ENCODE measurements at regions of chr5 and their contacts with region 1.

Region 1: GRCh38 chr5:173057062-173057924 is 1.1 kb downstream of the CREBRF start:
- DNase-seq: peak; percentile 98
- ATAC-seq: peak; percentile 80
- H3K4me3 Mint-ChIP-seq: peak overlapping the region; percentile 96
- H3K27ac Mint-ChIP-seq: peak overlapping the region; percentile 95
- H3K4me1 Mint-ChIP-seq: peaks cover 55% of the 10 kb centered on the region
- H3K27me3 Mint-ChIP-seq: no peaks in the 10 kb centered on the region
- CTCF ChIP-seq: no peak

Region 2: DNA sequence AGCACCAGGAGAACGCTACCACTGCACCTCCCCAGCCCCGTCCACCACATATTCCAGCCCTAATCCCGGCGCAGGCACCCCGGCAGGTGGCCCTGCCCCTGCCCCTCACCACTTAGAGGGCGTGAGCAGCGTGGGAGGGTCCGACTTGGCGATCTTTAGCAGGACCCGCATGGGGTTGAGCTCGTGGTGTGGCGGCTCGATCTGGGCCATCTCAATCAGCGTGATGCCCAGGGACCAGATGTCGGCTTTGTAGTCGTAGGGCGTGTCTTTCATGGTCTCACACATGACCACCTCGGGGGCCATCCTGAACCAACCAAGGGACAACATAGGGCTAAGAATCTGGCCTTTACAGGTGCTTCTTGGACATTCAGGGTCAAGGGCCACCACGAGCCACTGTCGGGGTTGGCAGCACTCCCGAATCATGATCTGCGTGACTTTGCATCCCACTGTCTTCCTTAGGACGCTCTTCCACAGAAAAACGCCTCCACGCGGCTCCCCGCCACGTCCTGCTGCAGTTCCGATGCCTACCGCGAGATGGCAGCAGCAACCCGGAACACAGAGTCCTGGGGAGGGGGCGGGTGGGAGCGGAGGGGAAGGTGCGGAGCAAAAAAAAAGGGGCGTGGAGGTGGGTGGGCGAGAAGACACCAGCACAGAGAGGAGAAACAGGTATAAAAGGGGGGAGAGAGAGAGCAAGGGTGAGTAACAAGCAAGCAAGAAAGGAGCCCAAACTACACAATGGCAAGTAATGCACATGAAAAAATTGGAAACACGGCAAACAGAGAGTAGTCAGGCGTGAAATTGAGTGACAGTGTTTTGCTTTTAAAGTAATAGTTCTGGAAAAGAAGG is 950.6 kb before region 1 on chr5:
- CTCF ChIA-PET with region 1: no interaction called
- POLR2A ChIA-PET with region 1: no interaction called
- intact Hi-C with region 1: loop called (anchors 5 kb)
- DNase-seq: peak; percentile 71
- ATAC-seq: no peak
- H3K4me3 Mint-ChIP-seq: no peak overlapping the region
- H3K27ac Mint-ChIP-seq: peak overlapping the region; percentile 68
- H3K4me1 Mint-ChIP-seq: peaks cover 41% of the 10 kb centered on the region
- H3K27me3 Mint-ChIP-seq: no peaks in the 10 kb centered on the region
- CTCF ChIP-seq: peak; percentile 34

Region 3: GRCh38 chr5:172683696-172684471 is 373.4 kb before region 1 on chr5:
- CTCF ChIA-PET with region 1: no interaction called
- POLR2A ChIA-PET with region 1: no interaction called
- intact Hi-C with region 1: loop called (anchors 2 kb)
- DNase-seq: peak; percentile 52
- ATAC-seq: peak; percentile 89
- H3K4me3 Mint-ChIP-seq: peak overlapping the region; percentile 77
- H3K27ac Mint-ChIP-seq: peak overlapping the region; percentile 76
- H3K4me1 Mint-ChIP-seq: peaks cover 22% of the 10 kb centered on the region
- H3K27me3 Mint-ChIP-seq: peaks cover 2% of the 10 kb centered on the region
- CTCF ChIP-seq: no peak

Region 4: DNA sequence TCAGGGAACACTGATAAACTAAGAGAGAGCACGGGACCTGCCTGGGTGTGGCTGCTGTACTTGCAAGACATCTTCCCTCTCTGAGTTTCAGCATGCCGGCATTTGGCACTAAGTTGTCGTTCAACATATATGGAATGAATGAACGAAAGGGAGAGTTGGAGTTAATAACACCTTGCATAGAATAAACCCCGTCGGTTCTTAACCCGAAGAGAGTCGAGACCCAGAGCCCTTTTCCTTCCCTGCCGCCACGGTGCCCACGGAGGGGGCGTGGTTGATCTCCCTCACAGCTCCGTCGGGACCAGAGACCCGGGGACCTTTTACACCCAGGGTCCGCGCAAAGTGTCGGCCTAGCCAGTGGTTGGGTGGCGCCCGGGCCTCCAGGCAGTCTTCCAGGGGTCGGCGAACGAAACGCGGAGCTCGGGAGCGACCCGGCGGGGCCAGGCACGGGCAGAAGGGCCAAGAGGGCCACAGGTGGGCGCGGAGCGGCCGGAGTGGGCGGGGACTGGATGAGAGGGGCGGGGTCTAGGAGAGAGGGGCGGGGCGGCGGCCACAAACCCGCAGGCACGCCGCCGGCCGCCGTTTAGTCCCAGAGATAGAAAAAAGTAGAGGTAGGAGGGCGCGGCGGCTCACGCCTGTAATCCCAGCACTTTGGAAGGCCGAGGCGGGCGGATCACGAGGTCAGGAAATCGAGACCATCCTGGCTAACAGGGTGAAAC is 98.8 kb before region 1 on chr5:
- CTCF ChIA-PET with region 1: interaction called, 3 read pairs
- POLR2A ChIA-PET with region 1: interaction called, 8 read pairs
- intact Hi-C with region 1: loop called (anchors 1 kb)
- DNase-seq: peak; percentile 64
- ATAC-seq: peak; percentile 76
- H3K4me3 Mint-ChIP-seq: peak overlapping the region; percentile 97
- H3K27ac Mint-ChIP-seq: peak overlapping the region; percentile 94
- H3K4me1 Mint-ChIP-seq: peaks cover 31% of the 10 kb centered on the region
- H3K27me3 Mint-ChIP-seq: no peaks in the 10 kb centered on the region
- CTCF ChIP-seq: no peak

Region 5: GRCh38 chr5:173025651-173026050 is 31.6 kb before region 1 on chr5:
- CTCF ChIA-PET with region 1: no interaction called
- POLR2A ChIA-PET with region 1: no interaction called
- intact Hi-C with region 1: no loop called
- DNase-seq: no peak
- ATAC-seq: no peak
- H3K4me3 Mint-ChIP-seq: no peak overlapping the region
- H3K27ac Mint-ChIP-seq: peak overlapping the region; percentile 11
- H3K4me1 Mint-ChIP-seq: peaks cover 3% of the 10 kb centered on the region
- H3K27me3 Mint-ChIP-seq: no peaks in the 10 kb centered on the region
- CTCF ChIP-seq: no peak

Region 6: DNA sequence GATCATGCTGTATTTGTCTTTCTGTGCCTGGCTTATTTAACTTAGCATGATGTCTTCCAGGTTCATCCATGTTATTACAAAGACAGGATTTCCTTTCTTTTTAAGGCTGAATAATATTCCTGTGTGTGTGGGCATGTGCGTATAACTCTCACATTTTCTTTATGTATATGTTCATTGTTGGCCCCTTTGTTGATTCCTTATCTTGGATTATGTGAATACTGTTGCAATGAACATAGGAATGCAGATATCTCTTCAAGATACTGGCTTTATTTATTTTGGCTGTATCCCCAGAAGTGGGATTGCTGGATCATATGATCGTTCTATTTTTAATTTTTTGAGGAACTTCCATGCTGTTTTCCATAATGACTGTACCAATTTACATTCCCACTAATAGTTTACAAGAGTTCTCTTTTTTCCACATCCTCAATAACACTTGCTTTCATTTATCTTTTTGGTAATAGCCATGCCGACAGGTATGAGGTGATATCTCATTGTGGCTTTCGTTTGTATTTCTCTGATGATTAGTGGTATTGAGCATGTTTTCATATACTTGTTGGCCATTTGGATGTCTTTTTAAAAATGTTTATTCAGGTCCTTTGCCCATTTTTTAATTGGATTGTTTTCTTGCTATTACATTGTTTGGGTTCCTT is 36.8 kb after region 1 on chr5:
- CTCF ChIA-PET with region 1: no interaction called
- POLR2A ChIA-PET with region 1: no interaction called
- intact Hi-C with region 1: loop called (anchors 1 kb)
- DNase-seq: no peak
- ATAC-seq: no peak
- H3K4me3 Mint-ChIP-seq: no peak overlapping the region
- H3K27ac Mint-ChIP-seq: no peak overlapping the region
- H3K4me1 Mint-ChIP-seq: peaks cover 24% of the 10 kb centered on the region
- H3K27me3 Mint-ChIP-seq: no peaks in the 10 kb centered on the region
- CTCF ChIP-seq: no peak

Region 7: DNA sequence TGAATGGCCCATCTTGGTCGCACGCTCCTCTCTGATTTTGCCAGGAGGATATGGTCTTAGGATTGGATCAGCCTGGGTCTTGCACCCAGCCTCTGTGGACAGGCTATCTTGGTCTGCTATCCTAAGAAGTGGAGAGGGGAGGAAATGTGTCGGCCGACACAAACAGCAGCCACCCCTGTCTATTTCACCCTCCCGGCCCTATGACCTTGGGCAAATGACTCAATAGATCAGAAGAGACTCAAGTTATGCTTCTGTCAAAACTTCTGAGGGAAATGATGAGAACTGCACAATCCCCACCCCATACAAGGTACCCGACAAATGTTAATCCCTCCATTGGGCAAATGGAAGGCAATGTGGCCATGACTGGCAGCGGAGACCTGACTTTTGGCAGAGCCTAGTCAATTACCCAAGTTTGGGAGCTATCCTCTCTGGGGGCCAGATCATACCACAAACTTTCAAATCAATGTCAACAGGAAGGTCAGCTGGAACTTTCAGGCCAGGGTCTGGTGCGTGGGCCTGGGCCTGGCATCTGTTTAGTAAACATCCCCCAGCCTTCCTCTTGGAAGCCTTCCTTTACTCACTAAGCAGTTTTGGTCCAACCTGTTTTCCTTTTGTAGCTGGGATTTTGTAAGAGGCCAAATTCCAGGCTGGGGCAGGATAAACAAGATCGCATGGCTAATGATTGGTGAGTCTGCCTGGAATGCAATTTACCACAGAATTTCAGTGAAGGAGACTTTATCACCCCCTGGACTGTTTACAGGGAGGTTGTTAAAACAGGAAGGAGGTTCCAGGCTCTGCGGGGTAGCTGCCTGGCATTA is 766.6 kb after region 1 on chr5:
- CTCF ChIA-PET with region 1: no interaction called
- POLR2A ChIA-PET with region 1: no interaction called
- intact Hi-C with region 1: loop called (anchors 5 kb)
- DNase-seq: no peak
- ATAC-seq: no peak
- H3K4me3 Mint-ChIP-seq: no peak overlapping the region
- H3K27ac Mint-ChIP-seq: peak overlapping the region; percentile 42
- H3K4me1 Mint-ChIP-seq: peaks cover 86% of the 10 kb centered on the region
- H3K27me3 Mint-ChIP-seq: no peaks in the 10 kb centered on the region
- CTCF ChIP-seq: no peak

Region 8: GRCh38 chr5:174056064-174056847 is 999.0 kb after region 1 on chr5:
- CTCF ChIA-PET with region 1: no interaction called
- POLR2A ChIA-PET with region 1: no interaction called
- intact Hi-C with region 1: no loop called
- DNase-seq: no peak
- ATAC-seq: no peak
- H3K4me3 Mint-ChIP-seq: no peak overlapping the region
- H3K27ac Mint-ChIP-seq: no peak overlapping the region
- H3K4me1 Mint-ChIP-seq: no peaks in the 10 kb centered on the region
- H3K27me3 Mint-ChIP-seq: peaks cover 4% of the 10 kb centered on the region
- CTCF ChIP-seq: no peak